Naive thymus-derived CD8-positive, alpha-beta T cell (primary cell): ENCODE measurements at regions of chr3 and their contacts with region 1.

Region 1: GRCh38 chr3:16884084-16884747 is 539 bp upstream of the PLCL2 start:
- DNase-seq: peak; percentile 57 to 84 (median 70)
- ATAC-seq: peak; percentile 35 to 49
- H3K4me3 Mint-ChIP-seq: peak overlapping the region; percentile 84 to 99 (median 96)
- H3K27ac Mint-ChIP-seq: peak overlapping the region; percentile 93 to 99 (median 96)
- H3K4me1 Mint-ChIP-seq: peaks cover 27 to 45% (median 36%) of the 10 kb centered on the region in 4 donors
- H3K27me3 Mint-ChIP-seq: no peaks in the 10 kb centered on the region

Region 2: GRCh38 chr3:16842272-16843270 is 41.6 kb before region 1 on chr3:
- POLR2A ChIA-PET with region 1: interaction called, 43 read pairs
- DNase-seq: peak; percentile 52 to 83 (median 72)
- ATAC-seq: peak; percentile 89 to 92
- H3K4me3 Mint-ChIP-seq: peak overlapping the region; percentile 77 to 93 (median 87)
- H3K27ac Mint-ChIP-seq: peak overlapping the region; percentile 95 to 99 (median 98)
- H3K4me1 Mint-ChIP-seq: peaks cover 32 to 88% (median 83%) of the 10 kb centered on the region in 4 donors
- H3K27me3 Mint-ChIP-seq: no peaks in the 10 kb centered on the region

Region 3: GRCh38 chr3:16849229-16849628 is 35.0 kb before region 1 on chr3:
- POLR2A ChIA-PET with region 1: interaction called, 12 read pairs
- DNase-seq: peak; percentile 18 to 84 (median 63)
- ATAC-seq: peak; percentile 90 to 93
- H3K4me3 Mint-ChIP-seq: peak overlapping the region; percentile 59 to 79 (median 76)
- H3K27ac Mint-ChIP-seq: peak overlapping the region; percentile 73 to 93 (median 87)
- H3K4me1 Mint-ChIP-seq: peaks cover 24 to 55% (median 48%) of the 10 kb centered on the region in 4 donors
- H3K27me3 Mint-ChIP-seq: no peaks in the 10 kb centered on the region

Region 4: DNA sequence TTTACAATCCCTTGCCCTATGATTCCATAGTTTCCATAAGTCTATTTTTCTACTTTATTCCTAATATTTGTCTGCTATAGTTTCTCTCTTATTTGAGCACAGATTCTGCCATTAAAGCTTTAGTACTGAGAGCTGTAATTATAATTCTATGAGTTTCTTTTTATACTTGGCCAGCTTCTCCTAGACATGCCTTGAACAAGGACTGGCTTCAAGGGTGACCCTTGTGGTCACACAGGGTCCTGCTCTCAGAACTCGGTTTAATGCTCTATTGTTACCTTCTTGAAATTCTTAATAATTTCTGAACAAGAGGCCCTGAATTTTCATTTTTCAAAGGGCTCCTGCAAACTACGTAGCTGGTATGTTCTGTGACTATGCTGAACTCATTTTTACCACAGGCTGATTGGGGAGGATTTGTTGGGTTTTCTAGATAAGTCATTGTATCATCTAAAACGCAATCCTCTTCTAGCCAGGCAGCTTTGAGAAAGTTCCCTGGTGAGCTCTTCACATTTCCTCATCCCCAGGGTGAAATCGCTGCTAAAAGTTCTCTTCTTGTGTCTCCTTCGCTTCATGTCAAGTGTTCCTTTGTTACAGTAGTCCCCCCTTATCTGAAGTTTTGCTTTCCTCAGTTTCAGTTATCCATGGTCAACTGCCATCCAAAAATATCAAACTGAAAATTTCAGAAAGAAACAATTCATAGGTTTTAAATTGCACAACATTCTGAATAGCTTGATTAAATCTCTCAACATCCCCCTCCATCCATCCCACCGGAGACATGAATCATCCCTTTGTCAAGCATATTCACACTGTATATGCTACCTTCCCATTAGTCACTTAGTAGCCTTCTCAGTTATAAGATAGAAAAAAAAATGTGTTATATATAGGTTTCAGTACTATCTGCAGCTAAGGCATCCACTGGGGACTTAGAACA is 12.0 kb before region 1 on chr3:
- POLR2A ChIA-PET with region 1: interaction called, 13 read pairs
- DNase-seq: no peak
- ATAC-seq: no peak
- H3K4me3 Mint-ChIP-seq: no peak overlapping the region
- H3K27ac Mint-ChIP-seq: peak overlapping the region in 1 of 10 donors; percentile 15
- H3K4me1 Mint-ChIP-seq: peaks cover 2 to 8% (median 5%) of the 10 kb centered on the region in 4 donors
- H3K27me3 Mint-ChIP-seq: peaks cover 0 to 14% (median 3%) of the 10 kb centered on the region in 5 donors

Region 5: DNA sequence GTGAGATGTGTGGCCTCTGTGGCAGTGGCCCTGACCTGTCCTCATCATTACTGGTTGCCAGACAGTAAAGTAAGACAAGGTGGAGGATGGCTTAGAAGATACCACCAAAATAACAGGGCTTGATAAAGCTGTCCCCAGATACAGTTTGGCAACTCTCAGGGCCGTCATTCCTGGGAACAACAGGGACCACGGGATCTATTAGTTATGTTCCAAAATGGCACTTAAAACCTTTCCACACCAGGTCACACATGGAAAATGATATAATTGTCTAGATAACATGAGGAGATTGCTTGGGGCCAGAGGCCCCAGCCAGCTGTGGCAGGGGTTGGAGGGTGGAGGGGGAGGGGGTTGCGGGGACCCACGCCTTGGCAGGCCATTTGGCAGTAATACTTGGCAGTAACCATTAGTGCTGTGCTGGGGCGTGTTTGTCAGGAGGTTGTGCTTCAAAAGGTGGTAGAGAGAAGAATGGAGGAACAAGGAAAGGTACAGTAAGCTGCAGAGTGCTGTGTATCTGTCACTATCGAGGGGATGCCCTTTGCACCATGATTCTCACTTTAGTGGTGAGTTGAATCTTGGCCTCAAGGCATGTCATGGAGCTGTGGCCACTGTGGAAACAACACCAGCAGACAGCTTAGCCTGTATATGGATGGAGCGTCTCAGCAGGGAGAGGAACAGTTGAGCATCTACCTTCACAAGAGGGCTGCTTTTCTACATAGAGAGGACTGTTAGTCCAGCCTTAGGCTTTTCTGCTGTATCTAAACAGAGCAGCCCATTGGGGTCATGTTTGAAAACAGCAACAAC is 14.6 kb after region 1 on chr3:
- POLR2A ChIA-PET with region 1: interaction called, 20 read pairs
- DNase-seq: no peak
- ATAC-seq: peak in 1 of 2 donors; percentile 16
- H3K4me3 Mint-ChIP-seq: peak overlapping the region; percentile 9 to 84 (median 74)
- H3K27ac Mint-ChIP-seq: peak overlapping the region; percentile 78 to 96 (median 92)
- H3K4me1 Mint-ChIP-seq: peaks cover 57 to 93% (median 88%) of the 10 kb centered on the region in 4 donors
- H3K27me3 Mint-ChIP-seq: no peaks in the 10 kb centered on the region